PC-9 (cell line): ENCODE measurements at regions of chr6 and their contacts with region 1.

Region 1: DNA sequence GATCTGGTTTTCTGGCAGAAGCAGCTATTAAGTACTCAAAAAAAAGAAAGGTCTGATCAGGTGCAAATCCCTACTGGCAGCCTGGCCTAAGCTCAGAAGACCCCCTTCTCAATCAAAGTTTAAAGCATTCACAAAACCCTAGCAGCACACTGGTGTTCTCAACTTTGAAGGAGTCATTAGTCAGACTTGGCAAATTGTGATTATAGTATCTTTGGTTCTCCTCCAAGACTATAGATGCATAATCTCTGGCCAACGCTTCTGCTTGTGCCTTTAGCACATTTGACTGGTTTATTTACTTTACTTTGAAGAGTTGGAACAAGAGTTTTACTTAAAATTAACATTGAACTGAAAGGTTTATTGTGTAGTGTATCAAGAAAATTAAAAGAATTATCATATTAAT is 248.9 kb downstream of the PTPRK start:
- DNase-seq: no peak
- H3K4me3 ChIP-seq: no peak overlapping the region
- H3K27ac ChIP-seq: no peak overlapping the region
- H3K4me1 ChIP-seq: no peaks in the 10 kb centered on the region
- H3K27me3 ChIP-seq: no peaks in the 10 kb centered on the region
- CTCF ChIP-seq: no peak

Region 2: DNA sequence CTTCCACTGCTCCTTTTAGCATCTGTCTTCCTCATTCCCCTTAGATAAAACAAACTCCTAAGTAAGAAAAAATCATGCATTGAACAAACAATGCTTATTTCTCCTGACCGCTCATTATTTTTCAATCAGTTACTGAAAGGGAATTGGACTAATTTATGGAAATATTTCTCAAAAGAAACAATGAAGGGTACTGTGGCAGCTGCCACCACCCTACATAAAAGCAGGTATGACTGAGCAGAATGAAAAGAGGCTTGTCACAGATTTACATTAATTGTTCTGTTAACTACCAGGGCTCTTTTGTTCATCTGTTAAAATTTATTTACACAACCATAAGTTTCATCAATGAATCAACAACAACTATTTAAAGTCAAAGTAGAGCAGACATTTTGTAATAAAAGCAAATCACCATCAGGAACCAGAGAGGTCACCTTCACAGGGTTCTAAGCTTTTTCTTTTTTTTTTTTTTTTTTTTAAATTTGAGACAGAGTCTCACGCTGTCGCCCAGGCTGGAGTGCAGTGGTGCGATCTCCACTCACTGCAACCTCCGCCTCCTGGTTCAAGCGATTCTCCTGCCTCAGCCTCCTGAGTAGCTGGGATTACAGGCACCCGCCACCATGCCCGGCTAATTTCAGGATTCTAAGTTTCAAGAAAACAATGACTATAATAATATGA is 44.9 kb after region 1 on chr6:
- CTCF ChIA-PET with region 1: no interaction called
- POLR2A ChIA-PET with region 1: interaction called, 10 read pairs
- intact Hi-C with region 1: no loop called
- DNase-seq: no peak
- H3K4me3 ChIP-seq: no peak overlapping the region
- H3K27ac ChIP-seq: no peak overlapping the region
- H3K4me1 ChIP-seq: no peaks in the 10 kb centered on the region
- H3K27me3 ChIP-seq: no peaks in the 10 kb centered on the region
- CTCF ChIP-seq: no peak